ENCODE measurements at regions of chr14 and their contacts with region 1.

Region 1: DNA sequence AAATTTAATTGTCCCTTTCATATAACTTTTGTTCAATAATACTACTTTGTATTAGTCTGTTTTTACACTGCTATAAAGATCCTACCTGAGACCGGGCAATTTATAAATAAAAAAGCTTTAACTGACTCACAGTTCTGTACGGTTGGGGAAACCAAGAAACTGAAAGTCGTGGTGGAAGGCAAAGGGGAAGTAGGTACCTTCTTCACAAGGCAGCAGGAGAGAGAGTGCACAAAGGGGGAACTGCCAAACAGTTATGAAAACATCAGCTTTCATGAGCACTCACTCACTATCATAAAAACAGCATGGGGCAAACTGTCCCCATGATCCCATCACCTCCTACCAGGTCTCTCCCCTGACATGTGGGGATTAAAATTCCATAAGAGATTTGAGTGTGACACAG is 1069.0 kb downstream of the FSCB start:
- DNase-seq: no peak
- H3K4me3 ChIP-seq: no peak overlapping the region
- H3K27ac ChIP-seq: no peak overlapping the region
- H3K4me1 ChIP-seq: no peaks in the 10 kb centered on the region
- H3K27me3 ChIP-seq: no peaks in the 10 kb centered on the region
- CTCF ChIP-seq: no peak
- EP300 ChIP-seq: no peak
- POLR2A ChIP-seq: no peak

Region 2: DNA sequence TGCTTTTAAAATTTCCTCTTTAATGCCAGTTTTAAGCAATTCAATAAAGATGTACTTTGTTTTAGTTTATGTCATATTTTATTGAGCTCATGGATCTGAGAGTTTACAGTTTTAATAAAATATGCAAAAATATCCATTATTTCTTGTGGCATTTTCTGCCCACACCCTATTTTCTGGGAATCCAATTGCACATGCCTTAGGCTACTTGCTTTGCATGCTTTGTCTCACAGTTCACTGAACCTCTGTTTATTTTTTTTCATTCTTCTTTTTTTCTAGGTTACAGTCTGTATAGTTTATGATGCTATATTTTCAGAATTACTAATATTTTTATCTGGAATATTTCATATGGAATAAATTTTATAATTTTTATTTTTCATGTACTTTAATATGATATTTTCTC is 188.9 kb before region 1 on chr14:
- in situ Hi-C with region 1: no loop called
- intact Hi-C with region 1: no loop called
- DNase-seq: no peak
- H3K4me3 ChIP-seq: no peak overlapping the region
- H3K27ac ChIP-seq: no peak overlapping the region
- H3K4me1 ChIP-seq: no peaks in the 10 kb centered on the region
- H3K27me3 ChIP-seq: no peaks in the 10 kb centered on the region
- CTCF ChIP-seq: no peak
- EP300 ChIP-seq: no peak
- POLR2A ChIP-seq: no peak

Region 3: DNA sequence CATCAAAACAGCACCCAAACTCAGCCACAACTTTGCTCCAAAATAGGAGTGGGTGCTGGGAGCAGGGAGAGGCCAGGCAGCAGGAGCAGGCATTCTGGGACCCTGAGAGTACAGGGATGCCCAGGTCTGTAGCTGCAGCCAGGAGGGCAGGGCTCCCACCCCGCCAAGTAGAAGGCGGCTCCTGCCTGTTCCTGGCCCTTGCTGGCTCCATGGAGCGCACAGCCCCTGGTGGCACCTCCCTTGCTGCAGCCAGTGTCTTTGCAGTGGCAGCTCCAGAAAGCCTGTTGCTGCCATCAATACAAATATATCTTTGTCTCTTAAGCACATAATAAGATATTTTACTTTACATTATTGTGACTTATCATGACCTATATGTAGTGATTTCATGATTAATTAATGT is 27.4 kb before region 1 on chr14:
- in situ Hi-C with region 1: no loop called
- intact Hi-C with region 1: loop called (anchors 2 kb)
- DNase-seq: no peak
- H3K4me3 ChIP-seq: no peak overlapping the region
- H3K27ac ChIP-seq: no peak overlapping the region
- H3K4me1 ChIP-seq: no peaks in the 10 kb centered on the region
- H3K27me3 ChIP-seq: no peaks in the 10 kb centered on the region
- CTCF ChIP-seq: no peak
- EP300 ChIP-seq: no peak
- POLR2A ChIP-seq: no peak

Region 4: DNA sequence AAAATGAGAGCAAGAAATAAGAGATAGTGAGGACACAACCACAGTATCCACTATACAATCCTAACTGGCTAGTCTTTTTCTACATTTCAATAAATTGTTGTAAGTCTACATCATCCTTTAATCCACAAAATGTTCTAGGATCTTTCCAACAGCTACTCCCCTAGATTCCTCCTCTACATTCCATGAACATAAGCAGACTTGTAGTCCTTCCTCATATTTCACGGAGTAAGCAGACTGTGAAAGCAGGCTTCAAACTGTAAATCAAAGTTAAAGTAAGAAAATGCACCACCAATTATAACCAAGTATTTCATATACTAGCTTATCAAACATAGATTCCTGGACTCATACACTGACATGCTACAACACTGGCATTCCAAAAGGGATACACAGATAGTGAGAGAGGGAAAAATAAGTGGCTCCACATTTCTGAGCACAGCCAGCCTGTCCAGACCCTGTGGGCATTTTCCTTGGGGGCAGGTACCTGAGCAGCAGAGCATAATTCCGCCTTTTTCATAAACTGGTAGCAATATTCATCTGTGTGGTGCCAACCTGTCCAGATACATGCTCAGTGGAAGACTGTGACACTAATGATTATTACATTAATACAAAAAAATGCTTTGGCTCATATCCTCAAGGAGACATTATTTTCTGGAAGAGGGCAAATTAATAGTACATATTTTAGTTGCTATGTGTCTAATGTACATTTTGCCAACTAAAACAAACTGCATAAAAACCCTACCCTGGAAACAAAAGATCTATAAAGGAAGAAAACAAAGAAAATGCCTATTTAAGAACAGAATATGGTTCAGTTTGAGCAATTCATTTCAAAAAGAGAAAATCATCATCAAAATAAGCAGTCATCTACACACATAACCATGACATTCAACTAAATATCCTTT is 1182.3 kb after region 1 on chr14:
- in situ Hi-C with region 1: no loop called
- intact Hi-C with region 1: no loop called
- DNase-seq: no peak
- H3K4me3 ChIP-seq: no peak overlapping the region
- H3K27ac ChIP-seq: no peak overlapping the region
- H3K4me1 ChIP-seq: no peaks in the 10 kb centered on the region
- H3K27me3 ChIP-seq: no peaks in the 10 kb centered on the region
- CTCF ChIP-seq: no peak
- EP300 ChIP-seq: no peak
- POLR2A ChIP-seq: no peak

Measured in transverse colon (tissue), 4 donors.